ENCODE measurements at regions of chr19 and their contacts with region 1.

Region 1: DNA sequence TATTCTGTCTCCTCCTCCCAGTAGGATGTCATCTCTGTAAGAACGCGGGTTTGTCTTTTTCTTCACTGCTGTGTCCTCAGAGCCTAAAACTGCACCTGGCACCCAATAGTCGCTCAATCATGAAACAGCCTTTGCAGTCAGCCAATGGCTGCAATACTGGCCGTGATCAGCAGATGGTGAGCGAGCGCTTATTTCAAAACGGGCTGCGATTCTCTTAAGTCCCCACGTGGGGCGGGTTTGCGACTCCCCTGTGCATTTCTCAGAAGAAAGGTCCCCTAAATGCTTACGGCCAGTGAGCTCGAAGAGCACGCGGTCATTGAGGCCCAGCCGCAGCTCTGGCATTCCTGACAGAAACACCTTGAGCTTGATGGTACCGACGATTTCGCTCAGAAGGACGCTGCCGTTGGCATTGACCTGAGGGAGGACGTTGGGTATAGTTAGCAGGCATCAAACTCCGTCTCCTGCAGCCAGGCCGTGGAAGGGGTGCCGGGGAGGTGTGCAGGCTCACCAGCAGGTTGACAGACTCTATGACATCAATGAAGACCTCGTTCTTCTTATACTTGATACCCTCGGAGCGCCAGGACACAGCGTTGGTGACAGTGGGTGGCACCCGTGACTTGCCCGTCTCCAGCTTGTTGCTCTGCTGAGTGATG is 6.0 kb downstream of the AP1M2 start:
- DNase-seq: peak; percentile 80 to 92 (median 88)
- ATAC-seq: peak; percentile 98
- H3K4me3 ChIP-seq: no peak overlapping the region
- H3K27ac ChIP-seq: no peak overlapping the region
- H3K4me1 ChIP-seq: peaks cover 0 to 15% of the 10 kb centered on the region in 2 donors
- H3K27me3 ChIP-seq: no peaks in the 10 kb centered on the region
- CTCF ChIP-seq: peak; percentile 93 to 98

Region 2: DNA sequence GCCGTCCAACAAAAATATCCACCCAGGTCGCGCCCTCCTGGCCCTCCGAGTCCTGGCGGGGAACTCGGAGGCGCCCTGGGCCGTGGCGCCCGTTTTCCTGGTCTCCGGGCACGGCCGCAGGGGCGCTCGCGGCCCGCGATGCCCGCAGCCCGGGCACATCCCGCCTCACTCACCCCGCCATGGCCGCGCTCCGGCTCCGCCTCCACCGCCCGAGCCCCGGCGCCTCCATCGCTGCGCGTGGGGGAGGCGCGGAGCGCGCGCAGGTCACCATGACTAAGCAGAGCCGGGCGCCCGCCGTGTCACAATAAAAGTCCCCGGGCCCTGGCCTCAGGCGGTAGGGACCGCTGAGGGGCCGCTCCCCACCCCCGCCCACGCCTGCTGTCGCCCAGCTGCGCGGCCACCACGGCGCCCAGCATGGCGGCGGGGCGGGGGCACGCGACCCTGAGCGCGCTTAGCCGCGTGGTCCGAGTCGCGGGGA is 78.5 kb before region 1 on chr19:
- intact Hi-C with region 1: no loop called
- DNase-seq: peak; percentile 92 to 97 (median 95)
- ATAC-seq: peak; percentile 93
- H3K4me3 ChIP-seq: peak overlapping the region; percentile 83 to 97
- H3K27ac ChIP-seq: peak overlapping the region; percentile 96 to 98
- H3K4me1 ChIP-seq: peaks cover 12 to 61% of the 10 kb centered on the region in 2 donors
- H3K27me3 ChIP-seq: no peaks in the 10 kb centered on the region
- CTCF ChIP-seq: no peak

Region 3: DNA sequence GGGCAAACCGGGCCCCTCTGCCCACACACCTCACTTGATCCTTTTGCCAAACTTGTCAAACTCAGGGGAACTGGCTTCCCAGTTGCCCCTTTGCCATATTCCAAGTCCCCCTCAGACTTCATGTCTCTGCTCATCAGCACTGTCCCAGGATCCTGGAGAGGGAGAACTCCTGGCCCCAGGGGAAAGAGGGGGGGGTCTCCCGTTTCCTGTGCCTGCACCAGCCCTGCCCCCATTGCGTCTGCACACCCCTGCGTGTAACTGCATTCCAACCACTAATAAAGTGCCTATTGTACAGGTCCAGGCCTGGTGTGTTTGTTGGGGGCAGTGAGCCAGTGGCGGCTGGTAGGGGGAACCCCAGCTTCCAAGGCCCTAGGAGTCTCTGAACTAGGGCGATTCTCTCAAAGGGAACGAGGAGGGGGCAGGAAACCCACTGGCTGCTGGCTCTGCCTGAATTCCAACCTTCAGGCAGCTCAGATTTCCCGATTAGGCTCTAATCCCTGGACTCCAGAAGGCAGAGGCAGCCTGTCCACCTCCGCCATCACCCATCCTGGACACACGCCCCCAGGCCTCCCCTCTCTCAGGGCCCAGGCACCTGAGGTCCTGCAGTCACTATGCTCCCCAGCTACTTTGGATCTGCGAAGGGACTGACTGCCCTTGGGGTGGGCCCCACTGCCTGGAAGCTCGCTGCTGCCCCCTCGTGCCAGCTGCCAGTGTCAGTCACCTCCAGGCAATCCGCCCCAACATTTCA is 63.3 kb after region 1 on chr19:
- intact Hi-C with region 1: loop called (anchors 2 to 10 kb)
- DNase-seq: peak in 3 of 4 donors; percentile 85 to 95 (median 88)
- ATAC-seq: peak; percentile 96
- H3K4me3 ChIP-seq: no peak overlapping the region
- H3K27ac ChIP-seq: peak overlapping the region; percentile 3 to 41
- H3K4me1 ChIP-seq: peaks cover 4 to 34% of the 10 kb centered on the region in 2 donors
- H3K27me3 ChIP-seq: no peaks in the 10 kb centered on the region
- CTCF ChIP-seq: peak; percentile 74 to 84

Region 4: DNA sequence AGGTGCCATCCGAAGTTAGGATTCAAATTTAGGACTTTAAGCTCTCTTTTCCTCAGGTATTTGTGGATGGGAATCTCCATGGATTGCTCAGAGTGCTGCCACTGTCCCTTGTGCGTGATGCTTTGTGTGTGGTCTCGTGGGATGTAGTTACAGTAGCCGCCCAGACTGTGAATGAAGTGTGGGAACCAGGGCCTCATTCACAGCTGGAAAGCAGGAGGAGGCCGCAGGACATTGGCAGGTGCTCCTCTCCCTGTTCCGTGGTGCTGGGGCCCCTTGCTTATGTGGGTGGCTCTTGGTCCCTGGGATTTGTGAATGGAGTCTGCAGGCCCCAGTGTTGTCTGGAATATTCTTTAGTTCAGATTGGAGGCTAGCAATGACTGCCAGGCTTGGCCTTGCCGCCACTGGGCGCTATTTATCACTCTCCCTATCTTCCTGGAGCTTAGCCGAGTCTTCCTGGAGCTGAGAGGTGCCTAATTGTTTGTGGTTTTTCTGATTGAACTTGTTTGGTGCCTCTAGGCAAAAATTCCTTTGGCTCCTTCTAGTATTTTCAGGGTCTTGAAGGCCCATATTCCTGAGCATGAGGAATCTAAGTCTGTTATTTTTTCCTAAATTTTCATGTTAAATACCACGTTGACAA is 74.7 kb after region 1 on chr19:
- intact Hi-C with region 1: no loop called
- DNase-seq: peak in 1 of 4 donors; percentile 10
- ATAC-seq: no peak
- H3K4me3 ChIP-seq: peak overlapping the region in 1 of 2 donors; percentile 96
- H3K27ac ChIP-seq: peak overlapping the region; percentile 9 to 98
- H3K4me1 ChIP-seq: peaks cover 27 to 67% of the 10 kb centered on the region in 2 donors
- H3K27me3 ChIP-seq: no peaks in the 10 kb centered on the region
- CTCF ChIP-seq: no peak

Region 5: DNA sequence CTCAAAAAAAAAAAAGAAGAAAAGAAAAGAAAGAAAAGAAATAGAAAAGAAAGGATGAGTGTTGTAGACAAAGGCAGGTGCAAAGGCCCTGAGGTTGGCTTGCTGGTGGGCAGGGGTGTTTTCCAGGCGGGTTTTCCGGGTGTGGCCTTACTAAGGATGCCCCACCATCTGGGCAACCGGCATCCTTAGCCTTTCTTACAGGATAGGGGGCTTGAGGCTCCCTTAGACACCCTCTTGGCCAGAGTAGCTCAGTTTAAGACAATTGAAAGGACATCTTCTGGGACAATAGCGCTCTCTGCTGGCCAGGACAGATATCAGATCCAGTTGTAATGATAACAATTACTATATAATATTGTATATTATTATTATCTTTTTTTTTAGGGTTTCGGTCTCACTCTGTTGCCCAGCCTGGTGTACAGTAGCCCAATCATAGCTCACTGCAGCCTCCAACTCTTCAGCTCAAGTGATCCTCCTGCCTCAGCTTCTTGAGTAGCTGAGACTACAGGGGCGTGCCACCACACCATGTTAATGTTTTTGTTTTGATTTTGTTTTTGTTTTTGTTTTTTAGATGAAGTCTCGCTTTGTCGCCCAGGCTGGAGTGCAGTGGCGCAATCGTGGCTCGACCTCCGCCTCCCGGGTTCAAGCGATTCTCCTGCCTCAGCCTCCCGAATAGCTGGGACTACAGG is 118.7 kb after region 1 on chr19:
- intact Hi-C with region 1: loop called in 1 of 2 experiments (anchors 5 kb)
- DNase-seq: peak in 1 of 4 donors; percentile 43
- ATAC-seq: peak; percentile 15
- H3K4me3 ChIP-seq: no peak overlapping the region
- H3K27ac ChIP-seq: no peak overlapping the region
- H3K4me1 ChIP-seq: peaks cover 5 to 31% of the 10 kb centered on the region in 2 donors
- H3K27me3 ChIP-seq: no peaks in the 10 kb centered on the region
- CTCF ChIP-seq: peak; percentile 52 to 59

Measured in left lung (tissue), 14 donors.